ENCODE measurements at regions of chr14 and their contacts with region 1.

Region 1: DNA sequence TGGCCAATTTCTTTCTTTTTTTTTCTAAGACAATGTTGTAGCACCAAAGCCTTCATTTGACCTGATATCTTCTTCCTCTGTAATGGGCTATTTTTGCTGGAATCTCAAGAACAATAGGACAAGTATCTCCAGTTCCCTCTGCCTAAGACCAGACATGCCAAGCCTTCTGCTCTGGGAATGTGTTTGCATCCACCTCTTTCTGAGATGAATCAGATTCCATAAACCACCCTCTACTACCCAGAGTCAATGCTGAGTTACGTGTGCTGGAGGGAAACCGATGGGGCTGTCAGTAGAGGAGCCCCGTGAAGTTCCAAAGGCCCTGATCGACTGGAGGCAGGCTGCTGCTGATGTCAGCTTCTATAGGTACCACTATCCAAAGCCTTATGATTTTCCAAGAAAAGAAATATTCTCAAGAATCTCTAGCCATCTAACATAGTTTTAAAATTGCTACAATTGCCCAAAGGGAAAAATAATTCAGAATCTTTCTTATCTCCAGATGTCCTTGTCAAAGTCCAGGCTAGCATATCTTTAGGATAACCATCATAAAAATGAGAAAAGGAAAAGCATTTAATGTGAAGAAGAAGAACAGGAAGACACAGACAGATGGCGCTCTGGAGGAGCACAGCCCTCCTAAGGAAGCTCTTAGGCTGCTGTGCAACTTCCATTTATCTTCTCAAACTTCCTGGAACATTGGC is 101.9 kb downstream of the SLC8A3 start:
- DNase-seq: no peak
- ATAC-seq: no peak

Region 2: DNA sequence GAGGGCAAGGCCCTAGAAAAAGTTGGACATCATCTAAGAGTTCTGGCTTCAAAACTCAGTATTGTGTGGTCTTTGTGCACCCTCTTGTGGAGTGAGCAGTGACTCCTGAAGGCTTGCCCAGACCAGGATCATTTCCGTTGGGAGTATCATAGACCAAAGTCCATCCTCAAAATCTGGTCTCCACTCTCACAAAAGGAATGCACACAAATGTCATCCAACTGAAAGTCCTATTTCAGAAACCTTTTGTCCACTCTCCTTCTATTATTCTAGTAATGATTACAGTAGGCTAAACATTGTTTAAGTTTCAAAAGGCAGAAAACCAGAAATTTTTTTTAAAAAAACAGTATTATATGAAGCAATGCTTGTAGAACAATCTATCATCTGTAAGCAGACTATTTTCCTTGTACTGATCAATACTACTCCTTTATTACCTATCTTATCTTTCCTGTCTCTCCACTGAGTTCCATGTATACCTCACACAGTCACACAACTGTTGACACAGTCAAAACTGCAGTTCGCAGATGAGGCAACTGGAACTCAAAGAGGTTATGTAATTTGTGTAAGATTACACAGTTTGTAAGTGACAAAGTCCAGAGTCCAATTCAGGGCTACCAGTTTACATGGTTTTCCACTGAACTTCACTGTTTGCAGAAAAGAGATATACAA is 231.3 kb after region 1 on chr14:
- intact Hi-C with region 1: loop called (anchors 5 kb)
- DNase-seq: no peak
- ATAC-seq: no peak